GM23248 (cell line): ENCODE measurements at regions of chr7 and their contacts with region 1.

Region 1: GRCh38 chr7:29408841-29409243 is 154.8 kb upstream of the PRR15 start:
- DNase-seq: peak; percentile 89
- H3K4me3 ChIP-seq: no peak overlapping the region
- H3K27ac ChIP-seq: no peak overlapping the region
- H3K4me1 ChIP-seq: 0 out of 2 replicates have a peak, but pooled peaks cover 2% of the 10 kb centered on the region
- H3K27me3 ChIP-seq: peaks cover 15% of the 10 kb centered on the region; the same call in 1 of the 2 replicates

Region 2: DNA sequence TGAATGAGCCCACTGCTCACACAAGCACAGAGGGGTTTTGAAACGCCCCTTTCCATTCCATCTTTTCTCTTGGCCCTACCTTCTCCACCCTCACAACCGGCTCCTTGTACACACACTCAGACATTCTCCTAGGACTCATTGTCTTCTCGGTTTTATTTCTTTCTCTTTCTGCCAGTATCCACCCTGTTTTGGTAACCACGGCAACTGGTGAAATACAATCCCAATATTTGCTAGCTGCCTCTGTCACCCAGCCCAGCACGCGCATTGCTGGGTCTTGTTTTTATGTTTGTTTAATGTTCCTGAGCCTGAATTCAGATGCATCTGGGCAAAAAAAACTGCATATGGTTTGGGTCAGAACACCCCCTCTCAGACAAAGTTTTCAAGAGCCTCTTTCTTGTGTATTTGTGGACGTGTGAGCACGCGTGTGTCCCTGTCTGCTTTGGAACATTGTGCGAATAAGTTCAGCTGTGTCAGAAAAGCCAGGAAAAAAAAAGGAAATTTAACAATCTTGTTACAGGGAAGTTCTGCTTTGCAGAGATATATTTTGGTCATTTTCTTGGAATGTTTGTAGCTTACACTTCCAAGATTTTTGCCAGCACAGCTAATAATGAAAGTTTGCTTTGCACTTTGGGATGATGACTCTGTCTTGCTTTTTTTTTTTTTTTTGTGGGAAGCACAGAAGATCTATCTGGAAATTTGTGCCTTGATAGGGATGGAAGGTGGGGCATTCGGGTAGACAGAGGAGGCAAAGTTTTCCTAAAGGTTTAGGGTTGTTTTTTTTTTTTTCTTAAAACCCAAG is 676.6 kb before region 1 on chr7:
- in situ Hi-C with region 1: no loop called
- DNase-seq: peak; percentile 88
- H3K4me3 ChIP-seq: peak overlapping the region; percentile 72
- H3K27ac ChIP-seq: peak overlapping the region; percentile 95
- H3K4me1 ChIP-seq: peaks cover 42% of the 10 kb centered on the region
- H3K27me3 ChIP-seq: no peaks in the 10 kb centered on the region

Region 3: DNA sequence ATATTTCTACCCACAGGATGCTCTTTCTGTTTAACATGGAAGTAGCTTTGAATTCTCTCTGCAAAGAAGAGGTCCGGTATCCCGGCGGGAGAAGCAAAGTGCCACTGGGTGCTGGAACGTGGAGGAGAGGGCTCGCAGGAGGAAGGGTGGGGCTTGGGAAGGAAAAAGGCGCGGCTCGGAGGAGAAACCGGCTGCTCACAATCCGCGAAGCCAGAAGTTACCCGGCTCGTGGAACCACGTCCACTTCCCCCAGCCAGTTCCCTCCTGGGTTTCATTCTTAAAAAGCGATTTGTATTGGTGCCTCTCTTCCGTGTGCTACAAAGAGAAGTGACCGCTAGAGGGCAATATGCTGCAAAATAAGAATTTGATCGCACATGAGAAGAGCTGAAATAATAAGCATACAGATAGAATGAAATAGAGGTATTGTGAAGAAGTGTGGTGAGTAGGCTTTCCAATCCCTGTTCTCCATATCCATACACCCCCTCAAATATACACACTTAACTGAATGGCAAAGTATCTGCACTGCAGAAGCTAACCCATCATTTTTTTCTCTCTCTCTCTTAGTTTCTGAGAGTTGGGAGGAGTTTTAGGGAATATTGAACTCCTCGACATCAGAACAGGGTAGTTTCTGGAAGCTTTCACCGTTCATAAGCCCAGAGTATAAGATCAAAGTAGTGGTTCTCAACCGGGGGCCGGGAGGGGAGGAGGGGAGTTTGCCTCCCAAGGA is 481.8 kb before region 1 on chr7:
- in situ Hi-C with region 1: loop called (anchors 10 kb)
- DNase-seq: peak; percentile 93
- H3K4me3 ChIP-seq: peak overlapping the region; percentile 91
- H3K27ac ChIP-seq: no peak overlapping the region
- H3K4me1 ChIP-seq: peaks cover 5% of the 10 kb centered on the region
- H3K27me3 ChIP-seq: peaks cover 7% of the 10 kb centered on the region; the same call in 1 of the 2 replicates

Region 4: DNA sequence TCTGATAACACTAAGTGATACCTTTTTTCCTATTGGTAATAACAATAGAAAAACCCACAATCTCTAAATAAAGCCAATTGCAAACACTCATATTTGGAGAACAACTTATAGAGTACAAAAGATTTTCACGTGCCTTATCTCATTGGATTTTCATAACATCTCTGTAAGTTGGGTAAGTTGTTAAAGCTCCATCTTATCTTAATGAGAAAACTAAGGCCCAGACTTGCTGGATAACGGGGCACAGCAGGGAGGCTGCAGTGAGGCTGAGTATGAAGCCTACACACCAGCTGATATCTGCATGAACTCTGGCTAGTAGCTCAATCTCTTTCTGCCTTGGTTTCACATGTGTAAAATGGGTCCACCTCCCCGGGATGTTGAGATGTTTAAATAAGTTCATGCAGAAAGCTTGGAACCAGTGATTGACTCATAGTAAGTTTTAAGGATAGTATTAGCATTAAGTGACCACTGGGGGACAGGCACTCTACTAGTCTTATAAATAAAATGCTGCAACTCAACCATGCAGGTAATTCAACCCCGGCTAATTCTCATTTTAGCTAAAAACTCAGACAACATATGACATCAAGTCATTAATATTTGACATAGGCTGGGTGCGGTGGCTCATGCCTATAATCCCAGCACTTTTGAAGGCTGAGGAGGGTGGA is 289.2 kb before region 1 on chr7:
- in situ Hi-C with region 1: loop called (anchors 10 kb)
- DNase-seq: no peak
- H3K4me3 ChIP-seq: no peak overlapping the region
- H3K27ac ChIP-seq: no peak overlapping the region
- H3K4me1 ChIP-seq: no peaks in the 10 kb centered on the region
- H3K27me3 ChIP-seq: peaks cover 24% of the 10 kb centered on the region